Pancreas (tissue), 10 donors: ENCODE measurements at regions of chr14 and their contacts with region 1.

Region 1: GRCh38 chr14:77059276-77059915 is 30.9 kb upstream of the IRF2BPL start:
- DNase-seq: no peak
- ATAC-seq: peak in 3 of 4 donors; percentile 61 to 82 (median 77)
- H3K4me3 ChIP-seq: no peak overlapping the region
- H3K27ac ChIP-seq: no peak overlapping the region
- H3K4me1 ChIP-seq: no peaks in the 10 kb centered on the region
- H3K27me3 ChIP-seq: no peaks in the 10 kb centered on the region
- CTCF ChIP-seq: no peak

Region 2: DNA sequence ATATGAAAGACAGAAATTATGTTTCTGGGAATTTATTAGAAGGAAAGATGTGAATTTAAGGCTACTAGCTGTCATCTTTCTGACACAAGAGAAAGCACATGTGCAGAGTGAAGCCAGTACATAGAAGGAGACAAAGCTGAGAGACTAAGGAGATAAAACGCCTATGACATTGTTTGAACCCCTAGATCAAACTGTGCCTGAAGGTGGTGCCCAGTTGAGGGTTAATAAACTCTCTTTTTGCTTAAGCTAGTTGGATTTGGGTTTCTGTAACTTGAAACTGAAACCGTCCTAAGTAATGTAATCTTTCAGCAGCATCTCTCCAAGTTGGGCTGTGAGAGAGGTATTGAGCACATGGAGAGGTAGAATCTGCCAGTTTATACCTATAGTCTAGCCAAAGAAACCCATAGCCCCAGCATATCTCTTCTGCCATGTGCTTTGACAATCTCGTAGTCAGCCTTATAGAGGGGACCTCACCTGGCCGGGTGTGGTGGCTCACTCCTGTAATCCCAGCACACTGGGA is 149.0 kb before region 1 on chr14:
- intact Hi-C with region 1: loop called in 2 of 3 experiments (anchors 5 to 10 kb)
- DNase-seq: no peak
- ATAC-seq: no peak
- H3K4me3 ChIP-seq: no peak overlapping the region
- H3K27ac ChIP-seq: no peak overlapping the region
- H3K4me1 ChIP-seq: peaks cover 5 to 6% (median 5%) of the 10 kb centered on the region in 3 donors
- H3K27me3 ChIP-seq: no peaks in the 10 kb centered on the region
- CTCF ChIP-seq: no peak